HCT116 (cell line): ENCODE measurements at regions of chr17 and their contacts with region 1.

Region 1: GRCh38 chr17:50064258-50065001 is 8.5 kb downstream of the ITGA3 start:
- DNase-seq: peak; percentile 86
- ATAC-seq: peak; percentile 65
- H3K4me3 ChIP-seq: peak overlapping the region; percentile 10 to 50; a peak in 3 of 4 replicates
- H3K27ac ChIP-seq: peak overlapping the region; percentile 93
- H3K4me1 ChIP-seq: peaks cover 75 to 80% of the 10 kb centered on the region in 2 experiments
- H3K27me3 ChIP-seq: no peaks in the 10 kb centered on the region
- CTCF ChIP-seq: no peak
- POLR2A ChIP-seq: no peak
- RAD21 ChIP-seq: no peak

Region 2: GRCh38 chr17:50026901-50027630 is 37.4 kb before region 1 on chr17:
- CTCF ChIA-PET with region 1: interaction called, 21 read pairs
- POLR2A ChIA-PET with region 1: interaction called, 65 read pairs
- RAD21 ChIA-PET with region 1: interaction called, 7 to 15 read pairs
- intact Hi-C with region 1: loop called (anchors 2 kb)
- DNase-seq: peak; percentile 77
- ATAC-seq: peak; percentile 62
- H3K4me3 ChIP-seq: peak overlapping the region; percentile 52 to 55
- H3K27ac ChIP-seq: peak overlapping the region; percentile 93
- H3K4me1 ChIP-seq: peaks cover 28 to 44% of the 10 kb centered on the region in 2 experiments
- H3K27me3 ChIP-seq: no peaks in the 10 kb centered on the region
- CTCF ChIP-seq: peak; percentile 94 to 99 (median 98)
- POLR2A ChIP-seq: no peak
- RAD21 ChIP-seq: peak; percentile 97

Region 3: DNA sequence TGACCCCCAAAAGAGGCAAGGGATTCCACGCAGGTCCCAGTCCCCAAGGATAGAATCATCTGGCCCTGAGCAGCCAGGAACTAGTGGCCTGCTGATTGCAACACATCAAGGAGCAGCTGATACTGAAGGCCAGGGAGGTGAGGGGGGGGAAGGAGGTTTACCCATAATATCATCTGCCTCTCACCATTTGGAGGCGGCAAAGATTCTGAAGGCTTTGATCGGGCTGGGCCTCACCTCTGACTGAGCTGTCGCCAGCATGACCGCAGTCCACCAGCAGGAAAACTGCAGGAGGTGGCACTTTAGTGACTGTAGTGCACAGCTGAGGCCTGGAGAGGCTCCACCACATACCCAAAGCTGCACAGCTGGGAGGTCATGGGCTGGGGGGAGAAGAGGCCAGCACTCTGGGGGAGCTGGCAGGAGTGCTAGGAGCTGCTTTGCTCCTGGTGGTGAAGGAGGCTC is 29.0 kb before region 1 on chr17:
- CTCF ChIA-PET with region 1: interaction called, 5 read pairs
- POLR2A ChIA-PET with region 1: interaction called, 65 read pairs
- RAD21 ChIA-PET with region 1: interaction called in 1 of 2 experiments, 4 read pairs
- intact Hi-C with region 1: no loop called
- DNase-seq: no peak
- ATAC-seq: peak; percentile 95
- H3K4me3 ChIP-seq: no peak overlapping the region
- H3K27ac ChIP-seq: peak overlapping the region; percentile 13; the same call in 1 of the 2 replicates
- H3K4me1 ChIP-seq: peaks cover 22 to 45% of the 10 kb centered on the region in 2 experiments
- H3K27me3 ChIP-seq: no peaks in the 10 kb centered on the region
- CTCF ChIP-seq: peak in 2 of 3 experiments; percentile 38 to 45; a peak in 4 of 6 replicates
- POLR2A ChIP-seq: no peak
- RAD21 ChIP-seq: no peak

Region 4: GRCh38 chr17:50079334-50080095 is 15.1 kb after region 1 on chr17:
- CTCF ChIA-PET with region 1: interaction called, 25 read pairs
- POLR2A ChIA-PET with region 1: interaction called, 8 read pairs
- RAD21 ChIA-PET with region 1: interaction called, 3 to 4 read pairs
- intact Hi-C with region 1: no loop called
- DNase-seq: peak; percentile 65
- ATAC-seq: peak; percentile 93
- H3K4me3 ChIP-seq: no peak overlapping the region
- H3K27ac ChIP-seq: peak overlapping the region; percentile 42
- H3K4me1 ChIP-seq: peaks cover 6 to 16% of the 10 kb centered on the region in 2 experiments; a peak in 2 of 4 replicates
- H3K27me3 ChIP-seq: no peaks in the 10 kb centered on the region
- CTCF ChIP-seq: peak; percentile 100
- POLR2A ChIP-seq: no peak
- RAD21 ChIP-seq: peak; percentile 83

Region 5: DNA sequence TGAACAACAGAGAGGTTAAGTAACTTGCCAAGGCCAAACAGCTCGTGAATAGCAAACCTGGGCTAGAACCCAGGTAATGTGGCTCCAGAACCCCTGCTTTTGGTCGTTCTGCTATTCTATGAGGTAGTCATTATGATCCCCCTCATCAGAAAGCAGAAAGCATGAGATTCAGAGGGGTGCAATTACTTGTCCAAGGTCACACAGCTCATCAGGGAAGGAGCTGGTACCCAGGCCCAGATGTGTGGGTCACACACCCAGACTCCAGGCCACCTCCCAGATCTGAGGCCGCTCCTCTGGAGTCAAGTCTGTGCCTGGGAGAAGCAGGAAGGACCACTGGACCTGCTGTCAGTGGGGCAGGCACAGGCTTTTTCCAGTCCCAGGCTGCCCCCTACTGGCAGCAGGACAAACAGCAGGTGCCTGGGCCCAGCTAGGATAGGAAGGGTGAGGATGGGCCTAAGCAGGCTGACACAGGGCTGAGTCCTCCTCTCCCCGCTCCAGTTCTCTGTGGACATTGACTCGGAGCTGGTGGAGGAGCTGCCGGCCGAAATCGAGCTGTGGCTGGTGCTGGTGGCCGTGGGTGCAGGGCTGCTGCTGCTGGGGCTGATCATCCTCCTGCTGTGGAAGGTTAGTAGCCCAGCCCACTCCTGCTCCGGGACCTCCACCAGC is 22.9 kb after region 1 on chr17:
- CTCF ChIA-PET with region 1: interaction called, 17 read pairs
- POLR2A ChIA-PET with region 1: interaction called, 6 read pairs
- RAD21 ChIA-PET with region 1: interaction called in 1 of 2 experiments, 3 read pairs
- intact Hi-C with region 1: no loop called
- DNase-seq: peak; percentile 57
- ATAC-seq: peak; percentile 93
- H3K4me3 ChIP-seq: no peak overlapping the region
- H3K27ac ChIP-seq: no peak overlapping the region; the same call in 1 of the 2 replicates
- H3K4me1 ChIP-seq: peaks cover 0 to 4% of the 10 kb centered on the region in 2 experiments; a peak in 2 of 4 replicates
- H3K27me3 ChIP-seq: no peaks in the 10 kb centered on the region
- CTCF ChIP-seq: peak; percentile 92 to 100 (median 99)
- POLR2A ChIP-seq: no peak
- RAD21 ChIP-seq: peak; percentile 98

Region 6: GRCh38 chr17:50129728-50130558 is 65.5 kb after region 1 on chr17 and contains the start of gene SAMD14:
- CTCF ChIA-PET with region 1: no interaction called
- POLR2A ChIA-PET with region 1: no interaction called
- RAD21 ChIA-PET with region 1: no interaction called
- intact Hi-C with region 1: no loop called
- DNase-seq: no peak
- ATAC-seq: no peak
- H3K4me3 ChIP-seq: no peak within 1 kb of the TSS
- H3K27ac ChIP-seq: no peak within 1 kb of the TSS
- H3K4me1 ChIP-seq: peaks cover 16 to 32% of the 10 kb centered on the region in 2 experiments
- H3K27me3 ChIP-seq: no peaks in the 10 kb centered on the region
- CTCF ChIP-seq: no peak
- POLR2A ChIP-seq: no peak
- RAD21 ChIP-seq: no peak
- total RNA-seq, gene SAMD14: 1.5 TPM

Region 7: GRCh38 chr17:50269477-50270434 is 205.3 kb after region 1 on chr17:
- CTCF ChIA-PET with region 1: no interaction called
- POLR2A ChIA-PET with region 1: no interaction called
- RAD21 ChIA-PET with region 1: no interaction called
- intact Hi-C with region 1: no loop called
- DNase-seq: peak; percentile 60
- ATAC-seq: peak; percentile 67
- H3K4me3 ChIP-seq: no peak overlapping the region
- H3K27ac ChIP-seq: no peak overlapping the region
- H3K4me1 ChIP-seq: peaks cover 38 to 46% of the 10 kb centered on the region in 2 experiments
- H3K27me3 ChIP-seq: no peaks in the 10 kb centered on the region
- CTCF ChIP-seq: peak; percentile 92 to 98 (median 98)
- POLR2A ChIP-seq: no peak
- RAD21 ChIP-seq: peak; percentile 84